T-cell (primary cell): ENCODE measurements at regions of chr17 and their contacts with region 1.

Region 1: GRCh38 chr17:30093463-30094147 is 23.0 kb upstream of the NSRP1 start:
- DNase-seq: peak in 23 of 35 experiments; percentile 5 to 74 (median 18)
- ATAC-seq: peak in 3 of 4 experiments; percentile 56 to 63 (median 62)
- H3K4me3 ChIP-seq: no peak overlapping the region
- H3K4me3 Mint-ChIP-seq: no peak overlapping the region
- H3K27ac ChIP-seq: no peak overlapping the region
- H3K27ac Mint-ChIP-seq: no peak overlapping the region
- H3K4me1 ChIP-seq: peaks cover 0 to 4% of the 10 kb centered on the region in 2 experiments
- H3K4me1 Mint-ChIP-seq: peaks cover 6 to 7% (median 7%) of the 10 kb centered on the region in 3 donors
- H3K27me3 ChIP-seq: peaks cover 0 to 13% of the 10 kb centered on the region in 2 experiments
- H3K27me3 Mint-ChIP-seq: peaks cover 9 to 22% of the 10 kb centered on the region in 2 donors

Region 2: DNA sequence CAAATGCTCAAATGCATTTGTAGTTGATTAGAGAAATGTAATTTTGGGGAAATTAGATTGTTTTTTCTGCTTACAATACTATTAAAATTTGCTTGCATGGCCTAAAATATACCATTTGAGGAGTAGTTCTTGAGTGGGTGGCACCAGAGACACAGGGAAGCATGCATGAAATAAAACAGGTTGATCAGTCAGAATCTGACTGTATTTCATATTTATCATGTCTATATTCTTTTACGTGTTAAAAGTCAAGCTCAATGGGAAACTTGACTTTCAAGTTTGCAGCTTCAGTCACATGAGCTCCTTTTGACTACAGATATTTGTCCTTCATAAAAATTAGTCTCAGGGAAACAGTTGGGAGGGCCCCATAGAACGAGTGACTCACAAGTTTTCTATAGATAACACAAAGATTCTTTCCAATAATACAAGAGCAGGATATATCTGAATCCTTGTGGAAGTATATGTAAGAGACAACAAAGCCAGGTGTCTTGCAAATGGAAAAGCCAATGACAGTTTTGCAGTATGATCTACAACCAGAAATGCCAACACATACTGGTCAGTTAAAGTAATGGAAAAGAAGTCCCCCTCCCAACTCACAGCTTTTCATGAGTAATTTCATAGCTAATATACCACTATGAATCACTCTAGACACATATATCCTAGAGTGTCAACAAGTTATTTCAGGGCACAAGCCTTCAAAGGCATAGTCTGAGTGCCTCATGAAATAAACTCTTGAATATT is 428.7 kb before region 1 on chr17:
- CTCF ChIA-PET with region 1: interaction called in 1 of 2 experiments, 11 read pairs
- POLR2A ChIA-PET with region 1: no interaction called
- DNase-seq: no peak
- ATAC-seq: no peak
- H3K4me3 ChIP-seq: no peak overlapping the region
- H3K4me3 Mint-ChIP-seq: no peak overlapping the region
- H3K27ac ChIP-seq: no peak overlapping the region
- H3K27ac Mint-ChIP-seq: peak overlapping the region; percentile 64 to 65
- H3K4me1 ChIP-seq: peaks cover under 1 to 7% of the 10 kb centered on the region in 2 experiments
- H3K4me1 Mint-ChIP-seq: peaks cover 18 to 29% (median 22%) of the 10 kb centered on the region in 3 donors
- H3K27me3 ChIP-seq: no peaks in the 10 kb centered on the region
- H3K27me3 Mint-ChIP-seq: no peaks in the 10 kb centered on the region

Region 3: DNA sequence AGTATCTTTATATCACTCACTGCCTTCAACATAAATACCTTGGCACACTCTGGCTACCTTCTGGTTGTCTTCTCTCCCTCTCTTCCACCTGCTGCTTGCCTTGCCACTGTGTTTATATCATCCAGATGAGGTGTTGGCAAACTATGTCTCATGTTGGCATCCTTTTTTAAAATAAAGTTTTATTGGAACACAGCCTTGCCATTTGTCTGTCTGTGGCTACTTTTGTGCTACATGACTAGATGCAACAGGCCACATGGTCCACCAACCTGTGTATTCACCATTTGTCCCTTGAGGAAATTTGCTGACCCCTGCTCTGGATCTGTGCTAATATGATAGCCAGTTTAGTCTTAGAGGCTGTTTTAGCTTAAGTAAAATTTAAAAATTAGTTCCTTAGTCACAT is 59.9 kb after region 1 on chr17:
- CTCF ChIA-PET with region 1: interaction called in 1 of 2 experiments, 12 read pairs
- POLR2A ChIA-PET with region 1: no interaction called
- DNase-seq: no peak
- ATAC-seq: no peak
- H3K4me3 ChIP-seq: no peak overlapping the region
- H3K4me3 Mint-ChIP-seq: no peak overlapping the region
- H3K27ac ChIP-seq: no peak overlapping the region
- H3K27ac Mint-ChIP-seq: no peak overlapping the region
- H3K4me1 ChIP-seq: no peaks in the 10 kb centered on the region
- H3K4me1 Mint-ChIP-seq: peaks cover 24 to 40% (median 30%) of the 10 kb centered on the region in 3 donors
- H3K27me3 ChIP-seq: no peaks in the 10 kb centered on the region
- H3K27me3 Mint-ChIP-seq: no peaks in the 10 kb centered on the region